G401 (cell line): ENCODE measurements at regions of chr7 and their contacts with region 1.

Region 1: DNA sequence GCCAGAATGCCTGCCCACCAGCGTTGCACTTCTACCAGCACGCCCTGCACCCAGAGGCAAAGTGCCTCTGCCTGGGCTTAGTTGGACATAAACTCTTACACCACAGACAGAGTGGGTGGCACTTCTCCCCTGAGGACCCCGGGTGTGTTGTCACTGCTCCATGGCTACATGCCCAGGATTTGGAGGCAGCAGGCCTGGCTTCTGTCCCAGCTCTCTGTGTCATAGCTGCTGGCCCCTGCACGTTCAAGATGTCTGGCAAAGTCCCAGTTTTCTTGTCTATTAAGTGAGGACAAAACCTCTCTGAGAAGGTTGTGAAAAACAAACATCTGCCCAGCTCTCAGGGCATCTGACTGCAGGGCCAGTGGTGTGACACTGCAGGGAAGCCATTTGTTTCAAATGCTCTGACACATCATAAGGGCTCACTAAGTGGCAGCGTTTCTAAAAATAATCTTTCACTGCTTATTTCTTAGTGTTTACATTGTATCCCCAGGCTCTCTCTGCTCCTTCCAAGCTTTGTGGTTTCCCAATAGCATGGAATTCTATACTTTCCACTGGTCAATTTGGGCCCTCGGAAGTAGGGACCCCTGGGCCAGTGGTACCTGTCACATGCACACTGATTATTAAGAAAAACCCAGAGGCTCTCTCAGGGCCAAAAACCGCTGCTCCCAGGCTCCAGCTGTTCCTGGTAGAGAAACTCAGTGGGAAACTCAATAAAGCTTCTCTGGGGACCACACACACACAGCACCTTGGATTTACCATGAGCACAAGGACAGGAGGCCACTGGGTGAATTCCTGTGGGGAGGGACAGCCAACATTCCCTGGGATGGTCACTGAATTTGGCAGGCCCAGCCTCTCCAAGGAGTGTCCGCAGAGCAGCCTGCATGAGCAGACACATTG is 86.2 kb upstream of the ANLN start:
- DNase-seq: peak; percentile 54

Region 2: DNA sequence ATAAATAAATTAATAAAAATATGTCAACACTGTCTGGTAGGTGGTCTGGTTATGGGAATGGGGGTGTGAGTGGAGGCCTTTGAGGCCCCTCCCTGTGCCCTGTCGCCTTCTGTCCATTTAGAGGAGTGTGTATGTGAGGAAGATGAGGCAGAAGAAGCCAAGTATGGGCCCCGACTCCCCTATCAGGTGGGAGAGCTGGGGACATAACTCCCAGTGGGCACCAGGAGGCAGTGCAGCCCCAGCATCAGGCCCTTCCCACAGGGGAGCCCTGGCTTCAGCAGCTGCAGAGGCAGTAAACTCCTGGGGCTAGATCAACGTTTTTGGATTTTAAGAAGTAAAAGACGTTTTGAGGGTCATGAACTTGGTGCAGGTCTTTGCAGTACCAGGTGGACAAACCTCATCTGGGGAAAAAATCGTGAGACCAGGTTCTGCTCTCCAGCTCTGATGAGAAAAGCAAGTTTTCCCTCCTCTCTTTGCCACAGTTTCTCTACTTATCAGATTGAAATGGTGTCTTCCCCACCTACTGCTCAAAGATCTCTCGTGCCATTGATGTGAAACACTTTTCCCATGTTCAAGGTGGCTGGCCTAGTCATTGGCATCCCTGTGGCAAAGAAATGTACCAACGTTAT is 318.2 kb before region 1 on chr7:
- in situ Hi-C with region 1: loop called (anchors 25 kb)
- DNase-seq: peak; percentile 52